Activated CD4-positive, alpha-beta memory T cell treated with anti-CD3 and anti-CD28 coated beads for 36 hours (primary cell): ENCODE measurements at regions of chrX and their contacts with region 1.

Region 1: GRCh38 chrX:85003655-85004244 is at the start of gene APOOL:
- DNase-seq: peak; percentile 89
- H3K4me3 Mint-ChIP-seq: peak within 1 kb of the TSS; percentile 78
- H3K27ac Mint-ChIP-seq: peak within 1 kb of the TSS; percentile 65
- H3K4me1 Mint-ChIP-seq: peaks cover 9% of the 10 kb centered on the region
- H3K27me3 Mint-ChIP-seq: no peaks in the 10 kb centered on the region
- total RNA-seq, gene APOOL: 16.6 to 18.4 TPM

Region 2: DNA sequence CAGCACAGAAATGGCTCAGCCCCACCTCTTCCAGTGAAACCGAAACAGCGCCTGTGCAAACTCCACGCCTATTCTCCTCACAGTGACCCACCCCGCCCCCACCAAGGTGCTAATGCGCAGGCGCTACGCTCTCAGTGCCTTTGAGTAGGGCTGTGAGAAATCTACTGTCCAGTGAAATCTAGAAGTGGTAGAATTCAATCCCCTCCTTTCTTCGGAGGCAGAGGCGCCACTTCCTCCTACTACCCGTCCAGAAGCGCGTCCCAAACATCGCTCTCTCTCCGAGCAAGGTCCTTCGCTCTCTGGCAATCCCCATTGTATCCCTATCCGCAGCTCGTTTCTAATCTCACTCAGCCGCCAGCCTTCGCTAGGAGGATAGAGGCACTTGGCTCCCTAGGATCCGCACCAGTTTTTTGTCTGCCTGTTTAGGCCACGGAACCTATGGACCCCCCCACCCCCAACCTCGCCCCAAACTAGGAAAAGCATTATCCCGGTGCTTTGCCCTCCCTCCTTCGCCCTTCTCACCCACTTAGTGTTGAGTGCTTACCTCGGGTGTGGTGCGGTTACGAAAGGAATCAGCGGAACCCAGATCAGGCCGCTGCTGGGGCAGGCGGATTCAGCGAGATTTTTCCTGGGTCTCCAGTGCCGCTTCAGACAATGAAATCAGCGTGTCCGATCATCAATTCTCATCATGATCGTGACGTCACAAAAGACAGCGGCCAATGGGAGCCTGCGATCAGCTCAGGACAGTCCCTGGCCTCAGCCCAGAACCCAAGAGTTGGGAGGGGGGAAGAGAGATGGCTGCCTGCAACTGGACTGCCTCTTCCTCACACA is 501.7 kb before region 1 on chrX and contains the start of gene HDX:
- CTCF ChIA-PET with region 1: no interaction called
- POLR2A ChIA-PET with region 1: no interaction called
- intact Hi-C with region 1: loop called (anchors 5 kb)
- DNase-seq: peak; percentile 74
- H3K4me3 Mint-ChIP-seq: peak within 1 kb of the TSS; percentile 79
- H3K27ac Mint-ChIP-seq: peak within 1 kb of the TSS; percentile 71
- H3K4me1 Mint-ChIP-seq: no peaks in the 10 kb centered on the region
- H3K27me3 Mint-ChIP-seq: no peaks in the 10 kb centered on the region
- total RNA-seq, gene HDX: 1.0 to 1.1 TPM

Region 3: DNA sequence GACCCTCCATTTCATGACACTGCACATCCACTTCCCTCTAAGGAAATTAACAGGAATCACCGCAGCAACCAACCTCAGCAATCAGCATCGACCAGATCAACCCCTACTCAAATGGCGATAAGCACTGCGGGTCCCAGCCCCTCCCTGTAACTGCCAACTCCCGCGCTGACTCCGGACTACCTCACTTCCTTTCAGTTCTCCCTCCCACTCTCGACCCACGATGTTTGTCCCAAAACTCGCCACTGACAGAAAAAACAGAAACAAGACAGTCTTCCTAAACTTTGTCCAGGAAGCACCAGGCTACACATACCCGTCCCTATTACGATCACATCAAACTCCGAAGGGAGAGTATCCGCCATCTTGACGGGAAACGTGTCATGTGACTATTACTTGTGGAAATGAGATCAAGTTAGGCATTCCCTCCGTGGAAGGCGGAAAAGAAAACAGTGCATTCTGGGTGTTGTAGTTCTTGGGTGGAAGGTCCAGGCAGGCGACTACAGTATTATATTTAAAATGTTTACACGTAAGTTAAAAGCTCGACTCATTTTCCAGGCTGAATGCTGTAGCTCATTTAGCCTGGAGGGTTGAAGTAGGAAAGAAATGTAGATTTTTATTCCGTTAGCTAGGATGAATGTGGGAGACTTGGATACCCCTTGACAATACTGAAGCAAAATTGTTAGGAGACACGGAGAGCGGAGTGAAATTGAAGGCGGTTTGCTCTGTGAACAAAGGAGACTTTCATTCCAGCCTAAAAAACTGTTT is 1043.6 kb after region 1 on chrX and contains the start of gene CHM:
- CTCF ChIA-PET with region 1: no interaction called
- POLR2A ChIA-PET with region 1: no interaction called
- intact Hi-C with region 1: loop called (anchors 5 kb)
- DNase-seq: peak; percentile 68
- H3K4me3 Mint-ChIP-seq: no peak within 1 kb of the TSS
- H3K27ac Mint-ChIP-seq: no peak within 1 kb of the TSS
- H3K4me1 Mint-ChIP-seq: peaks cover 7% of the 10 kb centered on the region
- H3K27me3 Mint-ChIP-seq: peaks cover 2% of the 10 kb centered on the region
- total RNA-seq, gene CHM: 12.0 to 13.9 TPM